Right cardiac atrium (tissue), 5 donors: ENCODE measurements at regions of chr9 and their contacts with region 1.

Region 1: GRCh38 chr9:17810728-17811571 is 232.1 kb downstream of the SH3GL2 start:
- DNase-seq: peak in 2 of 3 donors; percentile 35 to 61
- ATAC-seq: peak in 1 of 2 donors; percentile 71
- H3K4me3 ChIP-seq: peak overlapping the region; percentile 22
- H3K27ac ChIP-seq: no peak overlapping the region
- H3K4me1 ChIP-seq: no peaks in the 10 kb centered on the region
- H3K27me3 ChIP-seq: no peaks in the 10 kb centered on the region

Region 2: GRCh38 chr9:17878810-17879370 is 67.9 kb after region 1 on chr9:
- intact Hi-C with region 1: no loop called
- DNase-seq: no peak
- ATAC-seq: no peak
- H3K4me3 ChIP-seq: no peak overlapping the region
- H3K27ac ChIP-seq: no peak overlapping the region
- H3K4me1 ChIP-seq: no peaks in the 10 kb centered on the region
- H3K27me3 ChIP-seq: no peaks in the 10 kb centered on the region

Region 3: GRCh38 chr9:18037981-18038380 is 227.0 kb after region 1 on chr9:
- intact Hi-C with region 1: no loop called
- DNase-seq: no peak
- ATAC-seq: no peak
- H3K4me3 ChIP-seq: no peak overlapping the region
- H3K27ac ChIP-seq: no peak overlapping the region
- H3K4me1 ChIP-seq: peaks cover 2% of the 10 kb centered on the region
- H3K27me3 ChIP-seq: no peaks in the 10 kb centered on the region

Region 4: GRCh38 chr9:18071651-18072060 is 260.7 kb after region 1 on chr9:
- intact Hi-C with region 1: no loop called
- DNase-seq: no peak
- ATAC-seq: peak; percentile 32 to 87
- H3K4me3 ChIP-seq: no peak overlapping the region
- H3K27ac ChIP-seq: peak overlapping the region; percentile 21
- H3K4me1 ChIP-seq: no peaks in the 10 kb centered on the region
- H3K27me3 ChIP-seq: no peaks in the 10 kb centered on the region

Region 5: DNA sequence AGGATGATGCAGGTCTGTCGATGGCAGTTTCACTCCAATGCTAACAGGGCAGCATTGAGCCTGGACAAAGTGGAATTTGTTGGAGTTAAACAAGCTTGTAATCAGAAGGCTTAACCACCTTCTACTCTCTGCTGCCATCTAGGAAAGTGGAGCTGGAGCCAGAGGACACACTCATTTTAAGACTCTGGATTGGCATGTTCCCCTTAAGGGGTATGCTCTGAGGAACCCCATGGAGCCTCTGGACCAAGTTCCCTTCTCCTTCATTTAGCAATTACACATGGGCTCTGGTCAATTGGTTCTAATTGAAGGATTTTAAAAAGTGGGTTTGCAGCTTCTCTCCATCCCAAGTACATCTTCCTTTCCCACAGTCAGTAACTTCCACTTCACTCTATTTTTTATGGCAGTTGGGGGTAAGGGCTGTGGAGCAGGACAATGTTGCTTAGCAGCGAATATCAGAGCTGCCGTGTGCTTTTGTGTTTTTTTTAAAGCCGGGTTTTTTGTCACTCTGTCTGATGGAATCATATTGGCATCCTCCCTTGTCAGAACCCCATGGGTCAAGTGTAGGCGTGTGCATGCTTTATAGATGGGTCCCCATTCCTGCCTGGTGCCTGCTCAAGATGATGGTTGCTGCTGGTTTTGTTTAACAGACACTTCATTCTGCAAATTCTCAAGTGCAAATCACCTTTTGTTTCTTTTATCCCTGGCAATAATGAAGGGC is 332.2 kb after region 1 on chr9:
- intact Hi-C with region 1: loop called in 1 of 4 experiments (anchors 10 kb)
- DNase-seq: no peak
- ATAC-seq: no peak
- H3K4me3 ChIP-seq: no peak overlapping the region
- H3K27ac ChIP-seq: no peak overlapping the region
- H3K4me1 ChIP-seq: no peaks in the 10 kb centered on the region
- H3K27me3 ChIP-seq: no peaks in the 10 kb centered on the region

Region 6: DNA sequence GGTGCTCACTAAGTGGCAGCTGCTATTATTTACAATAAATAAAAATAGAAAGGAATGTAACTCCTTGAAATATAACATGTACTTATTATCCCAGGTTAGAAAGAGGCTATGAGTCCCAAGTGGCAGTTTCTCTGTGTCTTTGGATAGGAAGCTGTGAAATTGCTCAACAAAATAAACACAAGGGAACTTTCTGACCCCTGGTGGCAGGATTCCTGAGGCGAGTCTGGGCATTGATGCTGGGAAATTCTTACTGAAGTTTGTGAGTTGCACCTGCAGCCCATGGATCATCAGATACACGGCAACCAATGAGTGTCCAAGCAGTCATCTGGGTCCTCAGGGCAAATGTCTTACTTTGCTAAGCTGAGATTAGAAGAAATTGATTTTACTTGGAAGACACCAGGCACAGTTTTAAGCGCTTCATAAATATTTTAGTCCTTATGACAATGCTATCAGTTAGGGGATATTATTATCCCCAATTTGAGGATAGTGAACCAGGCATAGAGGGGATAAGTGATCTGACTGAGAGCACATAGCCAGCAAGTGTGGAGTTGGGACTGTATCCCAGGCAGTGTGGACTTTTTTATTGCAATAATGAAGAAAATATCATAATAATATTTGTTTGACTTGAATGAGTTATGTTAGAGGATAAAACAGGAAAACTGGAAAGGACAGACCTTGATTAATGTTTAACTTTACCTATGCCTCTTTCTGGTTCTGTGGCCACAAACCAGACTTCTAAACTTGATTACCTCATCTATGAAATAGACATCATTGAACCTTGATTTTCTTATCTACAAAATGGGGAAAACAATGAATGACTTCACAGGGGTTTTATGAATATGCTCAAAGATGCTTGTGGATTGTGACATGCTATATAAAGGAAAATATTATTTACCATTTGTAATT is 397.5 kb after region 1 on chr9:
- intact Hi-C with region 1: loop called (anchors 2 to 5 kb)
- DNase-seq: peak in 2 of 3 donors; percentile 19 to 65
- ATAC-seq: peak; percentile 45 to 57
- H3K4me3 ChIP-seq: no peak overlapping the region
- H3K27ac ChIP-seq: no peak overlapping the region
- H3K4me1 ChIP-seq: no peaks in the 10 kb centered on the region
- H3K27me3 ChIP-seq: no peaks in the 10 kb centered on the region

Region 7: GRCh38 chr9:18215626-18216025 is 404.7 kb after region 1 on chr9:
- intact Hi-C with region 1: loop called in 2 of 4 experiments (anchors 2 to 5 kb)
- DNase-seq: no peak
- ATAC-seq: no peak
- H3K4me3 ChIP-seq: no peak overlapping the region
- H3K27ac ChIP-seq: no peak overlapping the region
- H3K4me1 ChIP-seq: no peaks in the 10 kb centered on the region
- H3K27me3 ChIP-seq: no peaks in the 10 kb centered on the region

Region 8: DNA sequence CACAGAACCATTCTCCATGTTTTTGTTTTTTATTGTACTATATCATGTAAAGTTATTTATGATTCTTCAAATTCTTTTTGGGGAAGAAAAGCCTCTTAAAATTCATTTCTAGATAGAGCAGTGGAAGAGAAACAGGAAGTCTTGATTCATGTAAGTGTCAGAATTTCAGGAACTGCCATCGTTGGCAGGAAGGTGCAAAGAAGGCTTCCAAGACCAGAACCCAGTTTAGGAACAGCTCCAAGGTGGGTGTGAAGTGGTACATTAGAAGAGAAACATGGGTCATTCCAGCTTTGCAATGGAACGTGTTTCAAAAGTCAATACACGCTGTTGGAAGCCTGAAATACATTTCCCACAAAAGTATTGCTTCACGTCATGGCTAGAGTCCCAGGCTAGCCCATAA is 1207.3 kb after region 1 on chr9:
- intact Hi-C with region 1: loop called in 1 of 4 experiments (anchors 10 kb)
- DNase-seq: no peak
- ATAC-seq: no peak
- H3K4me3 ChIP-seq: no peak overlapping the region
- H3K27ac ChIP-seq: no peak overlapping the region
- H3K4me1 ChIP-seq: no peaks in the 10 kb centered on the region
- H3K27me3 ChIP-seq: no peaks in the 10 kb centered on the region